ENCODE measurements at regions of chr19 and their contacts with region 1.

Region 1: DNA sequence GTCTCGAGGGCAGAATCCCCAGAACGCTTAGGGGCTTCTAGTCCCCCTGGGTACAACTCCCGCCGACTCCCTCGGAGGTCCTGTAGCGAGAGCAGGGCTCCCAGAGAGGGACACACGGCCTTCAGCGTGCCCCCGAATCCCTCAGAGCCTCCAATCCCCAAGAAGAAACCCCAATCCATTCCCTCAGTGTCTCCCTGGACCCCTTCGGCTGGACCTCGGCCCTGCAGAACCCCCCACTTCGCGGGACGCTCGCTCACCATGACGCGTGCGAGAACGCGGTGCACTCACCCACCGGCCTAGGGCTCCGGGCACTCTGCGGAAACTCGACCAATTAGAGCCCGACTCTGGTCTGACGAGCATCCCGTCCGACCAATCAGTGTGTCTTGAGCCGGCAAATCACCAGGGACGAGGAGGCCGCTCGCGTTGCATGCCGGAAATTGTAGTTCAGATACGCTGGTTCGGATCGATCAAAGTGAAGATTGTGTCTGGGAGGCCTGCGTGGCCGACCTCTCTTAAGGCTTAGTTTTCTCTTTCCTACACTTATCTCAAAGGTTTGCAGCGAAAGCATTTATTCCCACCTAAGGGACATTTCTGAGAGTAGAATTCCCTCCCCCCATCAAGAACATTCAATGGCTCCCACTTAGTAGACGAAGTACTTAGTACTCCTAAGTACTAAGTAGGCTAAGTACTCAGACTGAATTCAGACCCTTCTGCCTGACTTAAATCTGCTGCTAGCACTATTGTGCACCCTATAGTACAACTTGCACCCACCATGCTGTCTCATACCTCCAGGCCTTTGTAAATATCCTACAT is at the start of gene TMEM161A:
- DNase-seq: peak; percentile 98
- H3K4me3 ChIP-seq: peak within 1 kb of the TSS; percentile 85
- H3K27ac ChIP-seq: no peak within 1 kb of the TSS
- H3K4me1 ChIP-seq: peaks cover 19% of the 10 kb centered on the region
- CTCF ChIP-seq: no peak
- total RNA-seq, gene TMEM161A: 28.4 and 31.2 TPM in 2 replicates

Region 2: DNA sequence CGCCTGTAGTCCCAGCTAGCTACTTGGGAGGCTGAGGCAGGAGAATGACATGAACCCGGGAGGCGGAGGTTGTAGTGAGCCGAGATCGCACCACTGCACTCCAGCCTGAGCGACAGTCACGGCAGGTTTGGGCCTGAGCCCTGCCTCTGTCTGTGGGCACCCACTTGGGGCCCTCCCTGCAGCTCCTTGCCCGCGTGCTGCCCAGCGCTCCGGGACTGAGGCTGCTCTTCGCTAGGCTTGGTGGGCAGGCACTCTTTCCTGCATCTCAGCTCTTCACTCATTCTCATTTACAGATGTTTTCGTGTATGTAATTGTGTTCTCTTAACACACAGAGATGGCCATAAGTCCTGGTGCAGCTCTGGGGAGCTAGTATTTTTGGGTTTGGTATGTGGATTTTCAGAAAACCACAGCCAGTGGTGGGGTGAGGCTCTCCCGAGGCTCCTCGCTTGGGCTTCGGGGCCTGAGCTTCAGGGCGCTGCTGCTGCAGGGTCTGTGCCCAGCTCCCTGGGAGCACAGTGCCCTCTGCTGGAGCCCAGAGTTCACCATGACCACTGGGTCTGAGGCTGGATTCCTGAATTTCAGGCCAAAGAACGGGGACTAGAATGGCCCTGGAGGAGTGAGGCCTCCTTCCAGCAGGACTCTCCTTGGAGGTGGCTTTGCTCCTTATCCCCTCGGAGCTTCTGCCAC is 291.4 kb before region 1 on chr19:
- CTCF ChIA-PET with region 1: no interaction called
- POLR2A ChIA-PET with region 1: no interaction called
- intact Hi-C with region 1: no loop called
- DNase-seq: peak; percentile 72
- H3K4me3 ChIP-seq: no peak overlapping the region
- H3K27ac ChIP-seq: no peak overlapping the region
- H3K4me1 ChIP-seq: peaks cover 8% of the 10 kb centered on the region
- CTCF ChIP-seq: peak; percentile 91

Region 3: DNA sequence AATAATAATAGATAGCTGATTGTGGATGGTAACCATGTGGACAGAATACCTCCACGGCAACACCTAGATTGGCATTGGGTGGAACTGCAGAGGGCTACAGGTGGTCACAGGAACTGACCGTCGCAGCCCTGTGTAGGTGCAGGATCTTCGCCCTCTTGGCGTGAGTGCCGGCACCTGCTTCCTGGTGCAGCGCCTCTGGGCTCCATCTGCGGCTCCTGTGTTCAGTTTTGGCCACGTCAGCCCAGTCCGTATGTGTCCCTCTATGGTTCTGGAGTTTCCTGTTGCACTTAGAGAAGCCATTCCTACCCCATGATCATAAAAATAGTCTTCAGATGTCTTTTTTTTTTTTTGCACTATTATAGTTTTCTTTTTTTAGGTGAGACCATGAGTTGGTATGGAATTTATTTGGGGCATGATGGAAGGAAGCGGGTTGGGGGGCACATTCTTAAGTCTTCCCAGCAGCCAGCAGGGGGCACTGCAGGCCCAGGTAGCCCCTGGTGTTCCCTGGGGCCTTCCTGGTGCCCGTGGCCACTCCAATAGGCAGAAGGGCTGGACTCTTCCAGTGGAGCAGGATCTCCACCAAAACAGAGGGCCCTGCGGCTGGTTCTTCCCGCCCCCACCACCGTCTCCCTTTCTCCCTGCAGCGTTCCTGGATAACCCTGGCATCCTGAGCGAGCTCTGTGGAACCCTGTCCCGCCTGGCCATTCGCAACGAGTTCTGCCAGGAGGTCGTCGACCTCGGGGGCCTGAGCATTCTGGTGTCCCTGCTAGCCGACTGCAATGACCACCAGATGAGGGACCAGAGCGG is 84.7 kb before region 1 on chr19:
- CTCF ChIA-PET with region 1: no interaction called
- POLR2A ChIA-PET with region 1: no interaction called
- intact Hi-C with region 1: loop called (anchors 1 kb)
- DNase-seq: peak; percentile 69
- H3K4me3 ChIP-seq: no peak overlapping the region
- H3K27ac ChIP-seq: no peak overlapping the region
- H3K4me1 ChIP-seq: no peaks in the 10 kb centered on the region
- CTCF ChIP-seq: peak; percentile 87

Region 4: DNA sequence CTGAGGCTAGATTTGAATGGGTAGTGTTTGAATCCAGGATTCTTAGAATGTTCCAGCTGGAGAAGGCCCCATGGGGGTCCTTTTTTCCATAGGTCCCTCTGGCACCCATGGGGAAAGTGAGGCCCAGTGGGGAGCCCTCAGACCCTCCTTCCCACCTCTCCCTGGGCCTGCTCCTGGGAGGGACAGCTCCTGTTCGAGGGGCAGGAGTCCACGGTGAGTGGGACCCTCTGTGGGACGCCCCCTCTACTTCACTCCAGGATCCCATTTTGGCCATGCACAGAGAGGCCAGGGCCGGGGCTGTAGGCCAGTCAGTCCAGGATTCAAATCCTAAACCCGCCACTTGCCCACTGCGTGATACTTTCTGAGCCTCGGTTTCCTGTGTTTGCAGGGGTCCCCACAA is 24.1 kb after region 1 on chr19:
- CTCF ChIA-PET with region 1: no interaction called
- POLR2A ChIA-PET with region 1: no interaction called
- intact Hi-C with region 1: no loop called
- DNase-seq: no peak
- H3K4me3 ChIP-seq: peak overlapping the region; percentile 93
- H3K27ac ChIP-seq: peak overlapping the region; percentile 98
- H3K4me1 ChIP-seq: peaks cover 96% of the 10 kb centered on the region
- CTCF ChIP-seq: no peak

Measured in OCI-LY7 (cell line).